Panc1 (cell line): ENCODE measurements at regions of chr2 and their contacts with region 1.

Region 1: DNA sequence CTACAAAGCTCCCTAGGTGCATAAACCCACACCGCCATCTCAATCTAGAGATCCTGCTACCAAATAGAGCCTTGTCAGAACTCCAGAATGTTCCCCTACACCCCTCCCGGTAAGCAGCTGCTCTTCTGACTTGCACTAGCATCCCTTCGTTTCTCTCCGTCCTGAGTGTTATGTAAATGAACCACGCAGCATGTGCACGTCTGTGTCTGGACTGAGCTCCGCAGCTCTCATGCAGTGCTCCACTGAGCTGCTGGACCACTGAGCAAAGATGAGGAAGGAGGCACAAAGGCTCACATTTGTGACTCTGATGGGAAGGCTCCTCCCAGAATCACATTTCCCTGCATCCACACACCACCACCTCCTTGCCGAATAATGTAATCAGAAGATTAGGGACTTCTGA is 203.6 kb downstream of the MYT1L start:
- DNase-seq: no peak
- ATAC-seq: no peak
- H3K4me3 ChIP-seq: no peak overlapping the region
- H3K27ac ChIP-seq: no peak overlapping the region
- H3K4me1 ChIP-seq: no peaks in the 10 kb centered on the region
- H3K27me3 ChIP-seq: peaks cover 8% of the 10 kb centered on the region
- CTCF ChIP-seq: no peak

Region 2: GRCh38 chr2:1886405-1886992 is 241.0 kb before region 1 on chr2:
- CTCF ChIA-PET with region 1: no interaction called
- POLR2A ChIA-PET with region 1: no interaction called
- in situ Hi-C with region 1: no loop called
- intact Hi-C with region 1: loop called (anchors 10 kb)
- DNase-seq: peak; percentile 20
- ATAC-seq: peak; percentile 87
- H3K4me3 ChIP-seq: no peak overlapping the region
- H3K27ac ChIP-seq: no peak overlapping the region
- H3K4me1 ChIP-seq: peaks cover 2% of the 10 kb centered on the region; the same call in 1 of the 2 replicates
- H3K27me3 ChIP-seq: peaks cover 12% of the 10 kb centered on the region
- CTCF ChIP-seq: peak; percentile 94